ENCODE measurements at regions of chr22 and their contacts with region 1.

Region 1: DNA sequence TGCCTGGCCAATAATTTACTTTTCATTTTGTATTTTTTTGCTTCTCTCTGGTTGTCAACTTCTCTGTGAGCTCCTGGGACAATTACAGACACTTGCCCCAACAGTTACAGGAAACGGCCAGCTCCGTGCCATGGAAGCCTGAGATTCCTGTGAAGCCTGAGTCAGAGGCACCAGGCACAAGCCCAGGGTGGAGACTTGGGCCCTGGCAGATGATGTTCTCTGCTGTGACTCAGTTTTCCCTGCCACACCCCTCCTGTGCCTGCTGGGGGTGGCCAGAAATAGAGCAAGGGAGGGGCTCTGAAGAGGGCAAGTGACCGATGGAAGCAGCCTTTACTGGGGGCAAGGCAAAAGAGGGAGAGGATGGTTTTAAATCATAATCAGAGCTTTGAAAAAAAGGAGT is 4.9 kb downstream of the ATP5MGL start:
- DNase-seq: peak; percentile 87
- H3K4me3 ChIP-seq: no peak overlapping the region
- H3K27ac ChIP-seq: peak overlapping the region; percentile 74
- H3K4me1 ChIP-seq: peaks cover 12% of the 10 kb centered on the region
- H3K27me3 ChIP-seq: no peaks in the 10 kb centered on the region
- CTCF ChIP-seq: no peak
- POLR2A ChIP-seq: no peak

Region 2: GRCh38 chr22:42369245-42370041 is 266.1 kb before region 1 on chr22:
- CTCF ChIA-PET with region 1: no interaction called
- POLR2A ChIA-PET with region 1: no interaction called
- dilution Hi-C with region 1: no loop called
- intact Hi-C with region 1: no loop called
- DNase-seq: peak; percentile 75
- H3K4me3 ChIP-seq: peak overlapping the region; percentile 24 to 69 (median 28)
- H3K27ac ChIP-seq: no peak overlapping the region
- H3K4me1 ChIP-seq: peaks cover 16% of the 10 kb centered on the region
- H3K27me3 ChIP-seq: peaks cover 39 to 40% of the 10 kb centered on the region in 2 experiments
- CTCF ChIP-seq: no peak
- POLR2A ChIP-seq: no peak

Region 3: DNA sequence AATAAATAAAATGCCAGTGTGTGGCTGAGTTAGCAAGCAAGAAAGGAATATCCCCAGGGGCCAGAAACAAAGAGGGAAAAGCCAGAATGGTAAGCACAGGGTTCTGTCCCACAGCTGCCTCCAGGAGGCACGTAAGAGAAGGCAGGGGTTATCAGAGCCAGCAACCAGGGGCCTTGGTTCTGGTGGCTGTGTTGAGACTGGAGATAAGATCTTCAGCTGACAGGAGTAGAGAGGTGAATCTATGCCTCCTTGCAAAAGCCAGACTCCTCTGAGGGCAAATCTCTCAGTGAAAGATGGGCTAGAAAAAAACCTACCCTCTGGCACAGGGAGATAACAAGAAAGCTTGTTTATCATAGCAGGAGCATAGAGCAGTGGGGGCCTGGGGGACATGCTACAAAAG is 173.5 kb before region 1 on chr22:
- CTCF ChIA-PET with region 1: no interaction called
- POLR2A ChIA-PET with region 1: no interaction called
- dilution Hi-C with region 1: no loop called
- intact Hi-C with region 1: no loop called
- DNase-seq: no peak
- H3K4me3 ChIP-seq: no peak overlapping the region
- H3K27ac ChIP-seq: no peak overlapping the region
- H3K4me1 ChIP-seq: no peaks in the 10 kb centered on the region
- H3K27me3 ChIP-seq: peaks cover 15 to 16% of the 10 kb centered on the region in 2 experiments
- CTCF ChIP-seq: no peak
- POLR2A ChIP-seq: no peak

Region 4: GRCh38 chr22:42614312-42615091 is 21.0 kb before region 1 on chr22 and contains the start of gene POLDIP3:
- CTCF ChIA-PET with region 1: interaction called, 4 read pairs
- POLR2A ChIA-PET with region 1: interaction called, 4 read pairs
- dilution Hi-C with region 1: no loop called
- intact Hi-C with region 1: loop called (anchors 1 kb)
- DNase-seq: peak; percentile 97
- H3K4me3 ChIP-seq: peak within 1 kb of the TSS; percentile 89 to 94 (median 90)
- H3K27ac ChIP-seq: peak within 1 kb of the TSS; percentile 99
- H3K4me1 ChIP-seq: peaks cover 23% of the 10 kb centered on the region
- H3K27me3 ChIP-seq: no peaks in the 10 kb centered on the region
- CTCF ChIP-seq: peak in 1 of 2 donors; percentile 35
- POLR2A ChIP-seq: peak; percentile 75
- total RNA-seq, gene POLDIP3: 46.6 and 60.4 TPM in 2 replicates

Region 5: DNA sequence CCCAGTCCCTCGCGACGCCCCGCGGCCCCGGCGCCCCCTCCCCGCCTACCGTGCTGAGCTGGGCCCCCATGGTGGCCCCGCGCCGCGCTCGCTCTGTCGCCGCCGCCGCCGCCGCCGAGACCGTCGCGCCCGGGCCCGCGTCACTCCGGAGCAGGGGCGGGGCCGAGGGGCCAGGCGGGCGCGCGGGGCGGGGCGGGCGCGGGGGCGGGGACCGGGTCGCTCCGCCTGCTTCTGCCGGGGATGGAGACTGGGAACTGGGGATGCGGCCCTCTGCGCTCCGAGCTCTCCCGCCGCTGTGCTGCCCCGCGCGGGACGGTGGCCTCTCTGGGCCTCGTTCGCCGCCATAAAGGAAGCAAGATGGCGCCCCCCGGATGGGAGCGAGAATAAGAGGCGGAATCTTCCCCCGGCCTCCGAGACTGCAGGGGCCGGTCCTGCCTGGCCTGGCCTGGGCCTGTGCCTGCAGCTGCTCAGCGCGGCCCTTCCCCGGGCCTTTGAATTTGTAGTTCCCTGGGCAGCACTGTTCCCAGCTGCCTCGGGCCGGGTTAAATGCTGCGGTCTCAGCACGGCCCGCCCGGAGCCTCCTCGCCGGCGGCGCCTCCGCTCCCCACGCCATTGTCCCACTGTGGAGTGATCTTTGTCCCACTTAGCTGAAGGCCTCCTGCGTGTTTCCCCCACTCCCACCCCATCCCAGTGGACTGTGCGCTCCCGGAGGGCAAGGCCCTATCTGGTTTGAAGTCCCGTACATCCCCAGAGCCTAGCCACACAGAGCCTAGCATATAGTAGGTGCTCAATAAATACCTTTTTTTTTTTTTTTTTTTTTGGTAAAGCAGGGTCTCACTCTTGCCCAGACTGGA is 13.9 kb after region 1 on chr22 and contains the start of gene CYB5R3:
- CTCF ChIA-PET with region 1: interaction called, 6 read pairs
- POLR2A ChIA-PET with region 1: interaction called, 3 read pairs
- dilution Hi-C with region 1: no loop called
- intact Hi-C with region 1: loop called (anchors 2 kb)
- DNase-seq: peak; percentile 81
- H3K4me3 ChIP-seq: peak within 1 kb of the TSS; percentile 5 to 92 (median 42)
- H3K27ac ChIP-seq: peak within 1 kb of the TSS; percentile 75
- H3K4me1 ChIP-seq: peaks cover 37% of the 10 kb centered on the region
- H3K27me3 ChIP-seq: no peaks in the 10 kb centered on the region
- CTCF ChIP-seq: no peak
- POLR2A ChIP-seq: no peak
- total RNA-seq, gene CYB5R3: 217 and 232 TPM in 2 replicates